CD8-positive, alpha-beta memory T cell (primary cell): ENCODE measurements at regions of chr1 and their contacts with region 1.

Region 1: DNA sequence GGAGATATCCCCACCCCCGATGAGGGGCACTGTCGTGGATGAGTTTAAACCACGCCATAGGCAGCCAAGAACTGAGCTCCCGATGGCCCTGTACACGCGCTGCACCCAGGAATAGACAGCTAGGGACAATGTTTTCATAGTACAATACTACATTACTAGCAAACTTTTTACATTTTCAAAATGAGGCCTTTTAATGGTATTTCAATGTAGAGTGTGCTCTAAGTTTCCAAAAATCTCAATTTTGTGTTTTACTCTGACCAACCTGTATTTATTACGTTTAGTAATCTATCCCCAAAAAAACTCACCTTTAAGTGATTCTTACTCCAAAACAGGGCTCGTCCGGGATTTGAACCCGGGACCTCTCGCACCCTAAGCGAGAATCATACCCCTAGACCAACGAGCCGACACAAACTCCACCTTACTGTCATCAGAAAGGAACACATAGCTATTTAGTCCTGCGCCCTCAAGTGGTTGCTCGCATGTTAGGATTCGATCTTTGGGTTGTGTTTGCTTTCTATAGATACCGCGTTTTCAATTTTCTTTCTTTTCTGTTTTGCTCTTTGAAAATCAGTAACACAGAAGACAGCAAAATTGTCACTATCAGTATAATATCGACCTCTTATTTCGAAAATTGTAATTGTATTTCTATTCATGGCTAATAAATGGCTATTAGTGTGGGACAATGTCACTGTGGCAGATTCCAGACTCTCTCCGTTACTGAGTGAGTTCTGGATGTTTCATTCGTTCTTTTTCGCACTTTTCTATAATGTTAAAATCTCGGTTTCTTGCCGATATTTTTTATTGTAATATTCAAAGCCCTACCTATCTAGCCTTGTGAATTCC is 6.4 kb upstream of the MPZL1 start:
- DNase-seq: peak; percentile 67 to 90 (median 84)
- H3K4me3 ChIP-seq: peak overlapping the region; percentile 93
- H3K4me3 Mint-ChIP-seq: peak overlapping the region; percentile 83 to 96 (median 89)
- H3K27ac ChIP-seq: peak overlapping the region; percentile 71
- H3K27ac Mint-ChIP-seq: peak overlapping the region; percentile 59 to 98 (median 92)
- H3K4me1 ChIP-seq: peaks cover 25% of the 10 kb centered on the region
- H3K4me1 Mint-ChIP-seq: peaks cover 20 to 49% (median 29%) of the 10 kb centered on the region in 3 donors
- H3K27me3 ChIP-seq: no peaks in the 10 kb centered on the region
- H3K27me3 Mint-ChIP-seq: peaks cover 0 to 14% of the 10 kb centered on the region in 2 donors

Region 2: GRCh38 chr1:167627865-167628641 is 87.3 kb before region 1 on chr1:
- CTCF ChIA-PET with region 1: interaction called, 14 read pairs
- POLR2A ChIA-PET with region 1: no interaction called
- DNase-seq: peak; percentile 60 to 85 (median 77)
- H3K4me3 ChIP-seq: peak overlapping the region; percentile 60
- H3K4me3 Mint-ChIP-seq: peak overlapping the region; percentile 94 to 98 (median 96)
- H3K27ac ChIP-seq: peak overlapping the region; percentile 86
- H3K27ac Mint-ChIP-seq: peak overlapping the region; percentile 94 to 100 (median 98)
- H3K4me1 ChIP-seq: peaks cover 53% of the 10 kb centered on the region
- H3K4me1 Mint-ChIP-seq: peaks cover 61 to 68% (median 65%) of the 10 kb centered on the region in 3 donors
- H3K27me3 ChIP-seq: no peaks in the 10 kb centered on the region
- H3K27me3 Mint-ChIP-seq: peaks cover 0 to 5% of the 10 kb centered on the region in 2 donors

Region 3: GRCh38 chr1:167697667-167698141 is 17.7 kb before region 1 on chr1:
- CTCF ChIA-PET with region 1: interaction called, 10 read pairs
- POLR2A ChIA-PET with region 1: interaction called, 10 read pairs
- DNase-seq: no peak
- H3K4me3 ChIP-seq: no peak overlapping the region
- H3K4me3 Mint-ChIP-seq: no peak overlapping the region
- H3K27ac ChIP-seq: no peak overlapping the region
- H3K27ac Mint-ChIP-seq: peak overlapping the region in 2 of 8 donors; percentile 54 to 64
- H3K4me1 ChIP-seq: no peaks in the 10 kb centered on the region
- H3K4me1 Mint-ChIP-seq: peaks cover 8 to 21% (median 9%) of the 10 kb centered on the region in 3 donors
- H3K27me3 ChIP-seq: no peaks in the 10 kb centered on the region
- H3K27me3 Mint-ChIP-seq: no peaks in the 10 kb centered on the region

Region 4: GRCh38 chr1:167705250-167705649 is 10.1 kb before region 1 on chr1:
- CTCF ChIA-PET with region 1: interaction called, 10 read pairs
- POLR2A ChIA-PET with region 1: interaction called, 10 read pairs
- DNase-seq: no peak
- H3K4me3 ChIP-seq: no peak overlapping the region
- H3K4me3 Mint-ChIP-seq: no peak overlapping the region
- H3K27ac ChIP-seq: no peak overlapping the region
- H3K27ac Mint-ChIP-seq: peak overlapping the region in 3 of 8 donors; percentile 8 to 56 (median 17)
- H3K4me1 ChIP-seq: no peaks in the 10 kb centered on the region
- H3K4me1 Mint-ChIP-seq: peaks cover 20 to 37% (median 28%) of the 10 kb centered on the region in 3 donors
- H3K27me3 ChIP-seq: no peaks in the 10 kb centered on the region
- H3K27me3 Mint-ChIP-seq: no peaks in the 10 kb centered on the region

Region 5: DNA sequence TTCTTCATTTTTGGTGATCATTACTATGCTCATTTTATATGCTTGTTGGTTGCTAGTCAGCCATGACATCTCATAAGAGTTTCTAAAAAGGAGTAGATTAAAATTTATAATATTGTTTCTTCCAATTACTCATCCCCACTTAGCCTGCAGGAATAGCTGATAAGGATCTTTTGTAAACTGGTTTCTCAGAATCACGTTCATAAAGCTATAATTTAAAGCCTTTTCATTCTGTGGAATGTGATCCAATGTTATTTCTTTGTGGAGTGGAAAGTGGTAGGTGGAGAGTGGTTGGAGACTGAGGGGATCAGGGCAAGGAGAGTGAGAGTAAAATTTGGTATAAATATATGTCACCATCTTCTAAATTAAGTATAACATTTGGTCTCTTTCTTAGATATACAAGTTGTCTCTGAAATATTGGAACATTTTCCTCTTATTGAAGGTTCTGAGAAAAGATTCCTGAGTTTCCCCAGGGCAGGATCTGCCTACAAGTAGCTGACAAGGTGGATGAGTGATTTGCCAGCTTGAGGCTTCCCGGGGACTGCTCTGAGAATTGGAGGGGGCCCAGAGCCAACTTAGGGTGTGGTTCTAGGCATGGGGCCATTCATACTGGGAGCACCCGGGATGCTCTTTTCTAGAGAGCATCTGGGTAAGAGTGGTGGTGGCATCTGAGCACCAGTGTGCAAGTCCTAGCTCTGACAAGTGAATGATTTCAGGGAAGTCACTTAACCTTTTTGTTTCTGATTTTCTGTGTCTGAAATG is 681.7 kb after region 1 on chr1:
- CTCF ChIA-PET with region 1: no interaction called
- POLR2A ChIA-PET with region 1: no interaction called
- DNase-seq: no peak
- H3K4me3 ChIP-seq: no peak overlapping the region
- H3K4me3 Mint-ChIP-seq: no peak overlapping the region
- H3K27ac ChIP-seq: no peak overlapping the region
- H3K27ac Mint-ChIP-seq: no peak overlapping the region
- H3K4me1 ChIP-seq: peaks cover 25% of the 10 kb centered on the region
- H3K4me1 Mint-ChIP-seq: peaks cover 26 to 35% (median 32%) of the 10 kb centered on the region in 3 donors
- H3K27me3 ChIP-seq: no peaks in the 10 kb centered on the region
- H3K27me3 Mint-ChIP-seq: peaks cover 0 to 5% of the 10 kb centered on the region in 2 donors